Activated CD4-positive, alpha-beta memory T cell treated with anti-CD3 and anti-CD28 coated beads for 36 hours (primary cell): ENCODE measurements at regions of chr3 and their contacts with region 1.

Region 1: DNA sequence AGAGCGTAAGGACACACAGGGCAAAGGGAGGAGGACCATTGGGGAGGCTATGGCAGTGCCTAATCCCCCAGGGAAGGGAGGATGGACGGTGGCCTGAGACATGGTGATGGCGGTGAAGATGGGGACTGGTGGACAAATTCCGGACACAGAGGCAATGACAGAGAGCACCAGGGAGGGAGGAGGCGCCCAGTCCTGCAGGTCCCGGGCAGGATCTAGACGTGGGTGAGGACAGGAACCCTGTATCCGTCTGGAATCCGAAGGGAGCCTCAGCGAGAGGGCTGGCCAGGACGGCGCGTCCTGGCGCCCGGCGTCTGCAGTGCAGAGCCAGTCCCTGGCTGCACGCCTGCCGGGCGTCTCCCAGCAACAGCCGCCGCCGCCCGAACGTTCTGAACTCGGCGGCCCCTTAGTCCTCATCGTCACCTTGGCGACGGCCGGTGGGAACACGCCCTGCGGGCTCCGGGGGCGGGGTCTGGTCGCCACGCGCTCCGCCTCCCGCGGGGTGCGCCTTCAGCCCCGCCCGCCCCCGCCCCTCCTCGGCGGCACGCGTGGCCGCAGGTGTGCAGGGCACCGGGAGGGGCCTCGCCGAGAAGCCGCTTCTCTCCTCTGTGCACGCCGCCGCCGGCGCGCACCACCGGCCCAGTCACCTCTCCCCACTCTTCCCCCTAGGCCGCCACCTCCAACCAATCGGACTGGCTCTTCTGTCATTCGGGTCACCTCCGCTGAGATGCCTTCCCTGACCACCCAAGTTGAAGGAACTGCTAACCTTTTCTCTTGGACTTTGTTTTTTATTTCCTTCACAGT is 11.6 kb downstream of the XIRP1 start:
- DNase-seq: peak; percentile 92
- H3K4me3 Mint-ChIP-seq: peak overlapping the region; percentile 76
- H3K27ac Mint-ChIP-seq: peak overlapping the region; percentile 78
- H3K4me1 Mint-ChIP-seq: peaks cover 49% of the 10 kb centered on the region
- H3K27me3 Mint-ChIP-seq: no peaks in the 10 kb centered on the region

Region 2: GRCh38 chr3:38916706-38917105 is 264.0 kb before region 1 on chr3:
- CTCF ChIA-PET with region 1: no interaction called
- POLR2A ChIA-PET with region 1: no interaction called
- intact Hi-C with region 1: no loop called
- DNase-seq: no peak
- H3K4me3 Mint-ChIP-seq: no peak overlapping the region
- H3K27ac Mint-ChIP-seq: no peak overlapping the region
- H3K4me1 Mint-ChIP-seq: no peaks in the 10 kb centered on the region
- H3K27me3 Mint-ChIP-seq: peaks cover 3% of the 10 kb centered on the region

Region 3: GRCh38 chr3:39107388-39108199 is 73.2 kb before region 1 on chr3 and contains the starts of genes GORASP1 and TTC21A:
- CTCF ChIA-PET with region 1: no interaction called
- POLR2A ChIA-PET with region 1: interaction called, 5 read pairs
- intact Hi-C with region 1: loop called (anchors 2 kb)
- DNase-seq: peak; percentile 83
- H3K4me3 Mint-ChIP-seq: peak within 1 kb of the TSS; percentile 81
- H3K27ac Mint-ChIP-seq: peak within 1 kb of the TSS; percentile 74
- H3K4me1 Mint-ChIP-seq: peaks cover 42% of the 10 kb centered on the region
- H3K27me3 Mint-ChIP-seq: no peaks in the 10 kb centered on the region
- total RNA-seq, gene GORASP1: 32.7 to 34.1 TPM
- total RNA-seq, gene TTC21A: 1.7 to 1.8 TPM

Region 4: DNA sequence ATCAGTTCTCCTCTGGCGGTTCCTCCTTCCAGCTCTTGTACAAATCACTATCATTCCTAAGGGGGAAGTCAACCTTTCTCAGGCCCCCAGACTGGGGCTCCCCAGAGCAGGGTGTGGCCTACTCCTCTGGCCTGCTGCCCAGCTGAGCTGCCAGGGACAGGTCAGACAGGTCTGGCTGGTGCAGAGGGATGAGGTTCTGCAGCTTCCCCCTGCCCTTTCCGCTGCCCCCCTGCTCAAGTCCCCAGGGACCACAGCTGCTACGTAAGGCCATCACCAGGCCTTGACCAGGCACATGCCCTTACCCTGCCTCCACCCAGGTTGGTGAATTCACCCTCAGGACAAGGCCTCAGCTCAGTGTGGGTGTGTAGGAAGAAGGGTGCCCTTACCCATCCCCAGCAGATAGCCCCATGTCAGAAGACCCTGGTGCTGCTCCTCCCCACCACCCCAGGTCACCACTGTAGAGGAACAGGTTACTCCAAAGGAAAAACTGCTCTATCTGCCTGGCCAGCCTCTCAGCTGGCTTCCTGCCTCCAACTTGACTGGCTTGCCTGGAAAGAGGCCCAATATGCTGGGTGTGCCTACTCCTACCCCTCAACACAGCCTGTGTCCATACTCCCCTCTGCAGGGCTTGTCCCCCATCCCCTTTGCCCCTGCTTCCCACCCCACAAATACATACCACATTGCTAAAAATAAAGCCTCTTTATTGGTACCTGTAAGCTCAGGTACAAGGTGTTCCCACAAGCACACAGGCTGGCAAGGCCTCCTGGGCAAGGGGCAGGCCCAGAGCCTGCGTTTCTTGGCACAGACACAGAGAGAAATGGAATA is 39.4 kb before region 1 on chr3:
- CTCF ChIA-PET with region 1: no interaction called
- POLR2A ChIA-PET with region 1: no interaction called
- intact Hi-C with region 1: no loop called
- DNase-seq: no peak
- H3K4me3 Mint-ChIP-seq: no peak overlapping the region
- H3K27ac Mint-ChIP-seq: no peak overlapping the region
- H3K4me1 Mint-ChIP-seq: peaks cover 58% of the 10 kb centered on the region
- H3K27me3 Mint-ChIP-seq: no peaks in the 10 kb centered on the region

Region 5: GRCh38 chr3:39166134-39166731 is 14.5 kb before region 1 on chr3:
- CTCF ChIA-PET with region 1: interaction called, 10 read pairs
- POLR2A ChIA-PET with region 1: interaction called, 9 read pairs
- intact Hi-C with region 1: loop called (anchors 1 kb)
- DNase-seq: no peak
- H3K4me3 Mint-ChIP-seq: no peak overlapping the region
- H3K27ac Mint-ChIP-seq: no peak overlapping the region
- H3K4me1 Mint-ChIP-seq: peaks cover 15% of the 10 kb centered on the region
- H3K27me3 Mint-ChIP-seq: no peaks in the 10 kb centered on the region

Region 6: GRCh38 chr3:39383045-39383880 is 202.5 kb after region 1 on chr3 and contains the start of gene SLC25A38:
- CTCF ChIA-PET with region 1: interaction called, 4 read pairs
- POLR2A ChIA-PET with region 1: no interaction called
- intact Hi-C with region 1: loop called (anchors 2 kb)
- DNase-seq: peak; percentile 89
- H3K4me3 Mint-ChIP-seq: peak within 1 kb of the TSS; percentile 93
- H3K27ac Mint-ChIP-seq: peak within 1 kb of the TSS; percentile 97
- H3K4me1 Mint-ChIP-seq: peaks cover 36% of the 10 kb centered on the region
- H3K27me3 Mint-ChIP-seq: no peaks in the 10 kb centered on the region
- total RNA-seq, gene SLC25A38: 23.1 to 24.9 TPM